AG04449 (cell line): ENCODE measurements at regions of chr4 and their contacts with region 1.

Region 1: GRCh38 chr4:53702334-53703266 is 111.3 kb upstream of the LNX1 start:
- DNase-seq: no peak
- H3K4me3 ChIP-seq: peak overlapping the region; percentile 3; the same call in 1 of the 2 replicates
- CTCF ChIP-seq: no peak

Region 2: GRCh38 chr4:53541577-53542206 is 160.9 kb before region 1 on chr4:
- CTCF ChIA-PET with region 1: no interaction called
- POLR2A ChIA-PET with region 1: no interaction called
- DNase-seq: peak; percentile 86
- H3K4me3 ChIP-seq: no peak overlapping the region
- CTCF ChIP-seq: no peak

Region 3: DNA sequence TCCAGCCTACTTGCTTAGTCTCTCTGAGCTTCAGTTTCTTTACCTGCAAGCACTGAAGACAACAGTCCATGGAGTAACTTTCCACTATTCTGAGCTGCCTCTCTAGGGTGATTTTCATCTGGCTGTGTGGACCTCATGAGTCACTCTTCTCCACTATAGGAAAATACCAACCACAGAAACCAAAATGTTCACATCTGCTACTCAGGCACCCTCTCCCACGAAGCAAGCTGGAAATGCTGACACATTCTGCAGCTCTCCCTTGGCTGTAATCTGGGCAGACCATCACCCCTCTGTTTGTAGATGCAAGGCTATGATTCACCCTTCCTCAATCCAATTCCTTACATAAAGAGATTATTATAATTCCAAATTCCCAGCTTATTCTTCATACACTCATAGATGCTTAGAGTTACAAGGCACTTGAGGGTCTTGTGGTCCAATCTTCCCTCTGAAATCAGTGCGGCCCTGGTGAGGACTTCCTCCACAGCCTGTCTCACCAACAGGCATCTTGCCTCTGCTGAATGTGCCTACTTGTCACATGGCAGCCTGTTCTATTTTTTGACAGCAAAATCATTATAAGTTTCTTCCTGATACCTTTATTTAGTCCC is 14.3 kb before region 1 on chr4:
- CTCF ChIA-PET with region 1: interaction called, 61 read pairs
- POLR2A ChIA-PET with region 1: interaction called, 6 read pairs
- DNase-seq: peak; percentile 99
- H3K4me3 ChIP-seq: no peak overlapping the region
- CTCF ChIP-seq: no peak

Region 4: DNA sequence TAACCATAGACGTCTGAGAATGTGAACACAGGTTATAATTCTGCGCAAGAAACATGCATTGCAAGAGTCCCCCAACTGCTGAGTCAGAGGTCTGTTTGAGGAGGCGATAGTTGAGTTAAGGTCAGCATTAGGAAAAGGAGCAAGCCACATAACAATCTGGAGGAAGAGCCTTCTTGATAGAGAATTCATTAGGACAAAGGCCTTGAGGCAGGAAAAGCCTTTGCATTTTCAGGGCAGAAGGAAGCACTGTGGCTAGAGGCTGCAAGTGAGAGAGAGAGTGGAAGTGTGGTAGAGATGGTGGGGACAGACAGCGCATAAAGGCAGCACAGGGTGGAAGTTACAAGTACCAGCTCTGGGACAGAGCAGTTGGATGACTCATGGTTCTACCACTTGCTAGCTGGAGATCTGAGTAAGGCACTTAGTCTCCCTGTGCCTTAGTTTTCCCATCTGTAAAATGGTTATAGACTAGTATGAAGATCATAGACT is 14.5 kb after region 1 on chr4:
- CTCF ChIA-PET with region 1: interaction called, 34 read pairs
- POLR2A ChIA-PET with region 1: interaction called, 6 read pairs
- DNase-seq: no peak
- H3K4me3 ChIP-seq: no peak overlapping the region
- CTCF ChIP-seq: no peak

Region 5: GRCh38 chr4:53730031-53730805 is 27.6 kb after region 1 on chr4:
- CTCF ChIA-PET with region 1: no interaction called
- POLR2A ChIA-PET with region 1: no interaction called
- DNase-seq: no peak
- H3K4me3 ChIP-seq: no peak overlapping the region
- CTCF ChIP-seq: no peak

Region 6: GRCh38 chr4:53914313-53915016 is 211.9 kb after region 1 on chr4:
- CTCF ChIA-PET with region 1: interaction called, 53 read pairs
- POLR2A ChIA-PET with region 1: interaction called, 6 read pairs
- DNase-seq: peak; percentile 47
- H3K4me3 ChIP-seq: no peak overlapping the region
- CTCF ChIP-seq: no peak

Region 7: DNA sequence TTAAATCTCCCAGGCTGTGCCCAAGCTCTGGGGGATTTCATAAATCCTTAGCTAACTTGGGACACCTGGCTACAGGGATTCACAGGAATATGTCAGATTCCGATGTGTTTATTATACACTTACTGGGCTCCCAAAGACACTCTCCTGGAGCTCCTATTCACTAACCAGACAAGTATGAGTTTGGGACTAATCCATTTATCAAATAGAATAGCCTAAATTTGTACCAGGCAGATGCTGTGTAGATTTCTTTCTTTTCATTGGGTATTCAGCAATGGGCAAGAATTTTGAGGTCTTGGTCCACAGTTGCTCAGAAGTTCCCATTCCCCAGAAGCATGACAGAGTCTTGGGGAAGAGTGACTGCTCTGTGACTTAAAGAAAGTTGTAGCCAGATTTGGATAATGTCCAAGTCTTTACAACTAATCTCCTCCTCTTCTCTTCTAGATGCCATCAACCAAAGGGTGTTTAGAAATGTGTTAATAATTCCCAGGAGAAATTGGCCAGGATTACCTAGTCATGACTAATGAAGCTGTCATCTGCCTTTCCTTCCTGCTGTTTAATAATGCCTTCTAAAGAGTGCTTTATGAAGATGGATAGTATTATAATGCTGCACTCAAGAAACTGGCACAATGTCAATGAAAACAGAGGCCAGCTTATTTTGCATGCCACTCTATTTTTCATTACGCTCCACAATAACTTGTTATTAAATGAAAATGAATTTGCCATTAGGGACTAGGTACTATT is 240.9 kb after region 1 on chr4:
- CTCF ChIA-PET with region 1: no interaction called
- POLR2A ChIA-PET with region 1: no interaction called
- DNase-seq: no peak
- H3K4me3 ChIP-seq: no peak overlapping the region
- CTCF ChIP-seq: no peak